Breast epithelium (tissue), 4 donors: ENCODE measurements at regions of chr2 and their contacts with region 1.

Region 1: DNA sequence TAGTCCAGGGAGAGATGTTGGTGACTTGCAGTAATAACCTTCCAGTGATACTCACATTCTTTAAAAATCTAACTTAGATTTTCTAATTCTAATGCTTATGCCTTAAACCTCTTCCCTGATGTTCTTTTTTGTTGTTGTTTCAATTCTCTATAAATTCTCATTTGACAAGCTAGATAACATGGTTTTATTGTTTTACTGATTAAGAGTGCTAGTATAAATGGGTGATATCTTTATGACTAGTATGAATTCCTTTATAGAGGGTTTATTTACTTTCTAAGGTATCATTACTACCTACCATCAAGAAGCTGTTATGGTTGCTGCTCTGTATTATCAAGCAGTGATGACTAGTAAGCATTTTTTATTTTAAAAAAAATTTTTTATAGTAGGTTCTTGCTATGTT is 35.0 kb downstream of the ACVR2A start:
- DNase-seq: no peak
- H3K4me3 ChIP-seq: no peak overlapping the region
- H3K27ac ChIP-seq: peak overlapping the region in 1 of 2 donors; percentile 9
- H3K4me1 ChIP-seq: peaks cover 0 to 4% of the 10 kb centered on the region in 2 donors
- H3K27me3 ChIP-seq: no peaks in the 10 kb centered on the region
- CTCF ChIP-seq: no peak
- POLR2A ChIP-seq: no peak

Region 2: GRCh38 chr2:147607379-147607778 is 272.5 kb before region 1 on chr2:
- intact Hi-C with region 1: loop called (anchors 5 kb)
- DNase-seq: no peak
- H3K4me3 ChIP-seq: no peak overlapping the region
- H3K27ac ChIP-seq: no peak overlapping the region
- H3K4me1 ChIP-seq: no peaks in the 10 kb centered on the region
- H3K27me3 ChIP-seq: no peaks in the 10 kb centered on the region
- CTCF ChIP-seq: no peak
- POLR2A ChIP-seq: no peak

Region 3: GRCh38 chr2:148042219-148042618 is 162.4 kb after region 1 on chr2:
- intact Hi-C with region 1: no loop called
- DNase-seq: no peak
- H3K4me3 ChIP-seq: no peak overlapping the region
- H3K27ac ChIP-seq: no peak overlapping the region
- H3K4me1 ChIP-seq: no peaks in the 10 kb centered on the region
- H3K27me3 ChIP-seq: no peaks in the 10 kb centered on the region
- CTCF ChIP-seq: no peak
- POLR2A ChIP-seq: no peak